CD4-positive, alpha-beta T cell (primary cell): ENCODE measurements at regions of chr12 and their contacts with region 1.

Region 1: GRCh38 chr12:92145731-92146496 is at the start of gene BTG1:
- DNase-seq: peak; percentile 96 to 100 (median 98)
- ATAC-seq: peak; percentile 68
- H3K4me3 ChIP-seq: peak within 1 kb of the TSS; percentile 94
- H3K4me3 Mint-ChIP-seq: peak within 1 kb of the TSS; percentile 100
- H3K27ac ChIP-seq: peak within 1 kb of the TSS; percentile 88 to 98
- H3K27ac Mint-ChIP-seq: peak within 1 kb of the TSS; percentile 99
- H3K4me1 ChIP-seq: peaks cover 4% of the 10 kb centered on the region
- H3K4me1 Mint-ChIP-seq: peaks cover 39% of the 10 kb centered on the region
- H3K27me3 ChIP-seq: no peaks in the 10 kb centered on the region
- H3K27me3 Mint-ChIP-seq: peaks cover 15% of the 10 kb centered on the region
- CTCF ChIP-seq: no peak
- total RNA-seq, gene BTG1: 1,698 to 1,774 TPM

Region 2: DNA sequence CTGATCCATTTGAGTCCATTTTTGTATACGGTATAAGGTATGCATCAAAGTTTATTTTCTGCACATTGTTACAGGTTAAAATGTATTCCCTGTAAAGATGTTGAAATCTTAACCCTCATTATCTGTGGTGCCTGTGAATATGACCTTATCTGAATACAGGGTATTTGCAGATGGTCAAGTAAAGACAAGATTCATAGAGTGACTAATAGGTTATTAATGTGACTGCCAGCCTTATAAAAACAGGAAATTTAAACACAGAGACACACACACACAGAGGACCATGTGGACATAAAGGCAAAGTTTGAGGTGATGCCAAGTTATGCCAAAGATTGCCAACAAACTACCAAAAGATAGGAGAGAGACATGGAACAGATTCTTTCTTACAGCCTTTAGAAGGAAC is 616.1 kb before region 1 on chr12:
- CTCF ChIA-PET with region 1: no interaction called
- POLR2A ChIA-PET with region 1: no interaction called
- intact Hi-C with region 1: no loop called
- DNase-seq: no peak
- ATAC-seq: no peak
- H3K4me3 ChIP-seq: no peak overlapping the region
- H3K4me3 Mint-ChIP-seq: no peak overlapping the region
- H3K27ac ChIP-seq: no peak overlapping the region
- H3K27ac Mint-ChIP-seq: no peak overlapping the region
- H3K4me1 ChIP-seq: no peaks in the 10 kb centered on the region
- H3K4me1 Mint-ChIP-seq: no peaks in the 10 kb centered on the region
- H3K27me3 ChIP-seq: no peaks in the 10 kb centered on the region
- H3K27me3 Mint-ChIP-seq: no peaks in the 10 kb centered on the region
- CTCF ChIP-seq: no peak

Region 3: DNA sequence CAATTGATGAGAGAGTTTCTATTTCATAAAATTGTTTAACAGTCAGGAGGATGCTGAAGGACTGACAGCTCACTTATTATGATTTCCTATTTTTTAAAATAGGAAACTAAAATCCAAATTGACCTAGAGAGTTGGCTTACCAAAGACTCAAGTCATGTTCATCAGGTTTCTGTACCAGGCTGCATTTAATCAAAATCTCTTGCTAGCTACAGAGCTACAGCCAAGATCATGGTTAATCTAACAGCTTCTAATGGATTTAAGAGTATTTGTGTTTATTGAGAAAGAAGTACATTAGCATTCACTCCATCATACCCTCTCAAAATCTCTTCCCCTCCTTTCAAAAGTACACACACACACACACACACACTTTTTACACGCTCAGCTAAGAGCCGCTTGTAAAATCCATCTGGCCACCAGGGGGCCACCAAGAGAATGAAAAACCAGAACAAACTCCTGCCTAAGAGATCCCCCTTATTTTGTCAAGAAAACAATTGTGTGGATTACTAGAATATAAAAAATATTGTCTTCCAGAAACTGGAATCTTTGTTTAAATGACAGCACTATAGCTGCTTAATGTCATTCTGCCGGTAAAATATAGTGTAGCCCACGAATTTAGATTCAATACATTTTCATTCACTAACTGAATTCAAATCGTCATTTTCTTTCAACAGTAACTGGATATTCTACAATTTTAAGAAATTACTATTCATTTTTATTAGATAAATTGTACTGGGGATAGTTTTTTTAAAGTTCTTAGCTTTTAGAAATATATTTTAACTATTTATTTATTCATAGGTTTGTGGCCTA is 334.2 kb before region 1 on chr12:
- CTCF ChIA-PET with region 1: interaction called, 14 read pairs
- POLR2A ChIA-PET with region 1: interaction called, 70 read pairs
- intact Hi-C with region 1: loop called in 1 of 2 experiments (anchors 2 kb)
- DNase-seq: peak; percentile 58 to 90 (median 78)
- ATAC-seq: peak; percentile 86
- H3K4me3 ChIP-seq: no peak overlapping the region
- H3K4me3 Mint-ChIP-seq: no peak overlapping the region
- H3K27ac ChIP-seq: no peak overlapping the region
- H3K27ac Mint-ChIP-seq: peak overlapping the region; percentile 64
- H3K4me1 ChIP-seq: peaks cover 2% of the 10 kb centered on the region
- H3K4me1 Mint-ChIP-seq: peaks cover 26% of the 10 kb centered on the region
- H3K27me3 ChIP-seq: no peaks in the 10 kb centered on the region
- H3K27me3 Mint-ChIP-seq: no peaks in the 10 kb centered on the region
- CTCF ChIP-seq: peak; percentile 87

Region 4: GRCh38 chr12:92034858-92035401 is 111.0 kb before region 1 on chr12:
- CTCF ChIA-PET with region 1: interaction called, 3 read pairs
- POLR2A ChIA-PET with region 1: interaction called, 276 read pairs
- intact Hi-C with region 1: no loop called
- DNase-seq: peak; percentile 26 to 84 (median 58)
- ATAC-seq: peak; percentile 53
- H3K4me3 ChIP-seq: peak overlapping the region; percentile 54
- H3K4me3 Mint-ChIP-seq: peak overlapping the region; percentile 89
- H3K27ac ChIP-seq: peak overlapping the region; percentile 66 to 67
- H3K27ac Mint-ChIP-seq: peak overlapping the region; percentile 96
- H3K4me1 ChIP-seq: peaks cover 79% of the 10 kb centered on the region
- H3K4me1 Mint-ChIP-seq: peaks cover 95% of the 10 kb centered on the region
- H3K27me3 ChIP-seq: no peaks in the 10 kb centered on the region
- H3K27me3 Mint-ChIP-seq: no peaks in the 10 kb centered on the region
- CTCF ChIP-seq: no peak

Region 5: DNA sequence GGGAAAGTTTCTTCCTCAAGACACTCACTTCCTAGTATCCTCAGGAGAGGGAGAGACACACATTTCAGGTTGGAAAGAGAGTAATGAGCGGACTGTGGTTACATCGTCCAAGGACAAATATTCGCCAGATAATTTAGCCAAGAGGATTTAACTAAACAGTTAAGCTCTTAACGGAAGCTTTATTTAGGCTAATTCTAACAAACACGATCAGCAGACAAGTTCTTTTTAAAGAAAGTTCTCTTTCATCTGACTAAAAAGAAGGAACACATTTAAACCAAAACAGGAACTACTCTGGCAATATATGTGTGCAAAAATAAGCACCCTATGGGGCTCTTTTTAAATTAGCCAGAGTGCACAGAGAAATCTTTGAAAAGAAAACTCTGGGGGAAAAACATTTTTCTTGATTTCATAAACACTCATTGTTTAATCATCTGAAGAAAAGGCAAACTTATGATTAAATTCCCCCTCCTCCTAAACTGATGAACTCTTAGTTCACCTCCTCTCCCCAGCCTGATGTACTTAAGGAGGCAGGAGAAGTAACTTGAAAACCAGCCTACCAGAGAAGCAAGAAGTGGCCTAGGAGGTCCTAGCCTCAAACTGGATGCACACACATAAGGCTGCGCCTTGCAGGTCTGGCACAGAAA is 13.0 kb after region 1 on chr12:
- CTCF ChIA-PET with region 1: no interaction called
- POLR2A ChIA-PET with region 1: interaction called, 92 read pairs
- intact Hi-C with region 1: no loop called
- DNase-seq: peak in 3 of 14 experiments; percentile 15 to 35 (median 28)
- ATAC-seq: peak; percentile 73
- H3K4me3 ChIP-seq: no peak overlapping the region
- H3K4me3 Mint-ChIP-seq: peak overlapping the region; percentile 43
- H3K27ac ChIP-seq: peak overlapping the region; percentile 32 to 41
- H3K27ac Mint-ChIP-seq: peak overlapping the region; percentile 92
- H3K4me1 ChIP-seq: peaks cover 13% of the 10 kb centered on the region
- H3K4me1 Mint-ChIP-seq: peaks cover 76% of the 10 kb centered on the region
- H3K27me3 ChIP-seq: no peaks in the 10 kb centered on the region
- H3K27me3 Mint-ChIP-seq: no peaks in the 10 kb centered on the region
- CTCF ChIP-seq: no peak

Region 6: DNA sequence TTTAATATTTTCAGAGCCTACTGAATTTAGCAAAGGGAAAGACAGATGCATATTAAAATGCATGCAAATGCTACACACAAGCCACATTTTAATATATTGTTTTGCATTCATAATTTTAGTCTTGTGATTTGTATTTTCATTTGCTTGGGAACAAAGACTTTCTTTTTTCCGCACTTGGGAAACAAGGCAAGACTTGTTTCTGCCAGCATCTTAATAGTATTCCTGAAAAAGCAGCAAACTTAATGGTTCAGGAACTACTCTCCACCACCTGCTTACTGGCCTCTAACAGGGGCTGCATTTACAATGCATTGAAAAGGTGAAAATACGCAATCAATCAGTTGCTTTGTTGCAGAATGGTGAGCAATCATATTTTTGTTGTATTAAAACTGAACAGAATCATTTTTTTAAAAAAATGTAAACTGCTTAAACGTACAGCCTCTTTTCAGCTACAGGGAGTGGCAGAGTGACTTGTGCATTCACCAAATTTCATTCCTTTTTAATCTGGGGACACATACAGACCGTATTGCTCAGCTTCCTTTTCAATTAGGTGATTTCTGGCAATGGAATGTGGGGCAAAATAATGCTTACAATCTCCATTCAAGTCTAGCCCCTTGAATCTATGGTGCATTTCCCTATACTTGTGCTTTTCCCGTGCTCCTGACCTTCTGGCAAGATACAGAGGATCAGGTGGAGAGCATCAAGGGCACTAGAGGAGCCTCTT is 143.9 kb after region 1 on chr12:
- CTCF ChIA-PET with region 1: no interaction called
- POLR2A ChIA-PET with region 1: interaction called, 13 read pairs
- intact Hi-C with region 1: no loop called
- DNase-seq: no peak
- ATAC-seq: no peak
- H3K4me3 ChIP-seq: no peak overlapping the region
- H3K4me3 Mint-ChIP-seq: no peak overlapping the region
- H3K27ac ChIP-seq: no peak overlapping the region
- H3K27ac Mint-ChIP-seq: no peak overlapping the region
- H3K4me1 ChIP-seq: no peaks in the 10 kb centered on the region
- H3K4me1 Mint-ChIP-seq: peaks cover 31% of the 10 kb centered on the region
- H3K27me3 ChIP-seq: no peaks in the 10 kb centered on the region
- H3K27me3 Mint-ChIP-seq: no peaks in the 10 kb centered on the region
- CTCF ChIP-seq: no peak

Region 7: GRCh38 chr12:92408072-92408900 is 262.4 kb after region 1 on chr12:
- CTCF ChIA-PET with region 1: interaction called, 3 read pairs
- POLR2A ChIA-PET with region 1: interaction called, 210 read pairs
- intact Hi-C with region 1: loop called (anchors 2 to 5 kb)
- DNase-seq: peak in 7 of 14 experiments; percentile 21 to 76 (median 59)
- ATAC-seq: no peak
- H3K4me3 ChIP-seq: no peak overlapping the region
- H3K4me3 Mint-ChIP-seq: peak overlapping the region; percentile 9
- H3K27ac ChIP-seq: no peak overlapping the region
- H3K27ac Mint-ChIP-seq: peak overlapping the region; percentile 40
- H3K4me1 ChIP-seq: peaks cover 43% of the 10 kb centered on the region
- H3K4me1 Mint-ChIP-seq: peaks cover 73% of the 10 kb centered on the region
- H3K27me3 ChIP-seq: no peaks in the 10 kb centered on the region
- H3K27me3 Mint-ChIP-seq: no peaks in the 10 kb centered on the region
- CTCF ChIP-seq: no peak